Endothelial cell of umbilical vein (primary cell): ENCODE measurements at regions of chr4 and their contacts with region 1.

Region 1: DNA sequence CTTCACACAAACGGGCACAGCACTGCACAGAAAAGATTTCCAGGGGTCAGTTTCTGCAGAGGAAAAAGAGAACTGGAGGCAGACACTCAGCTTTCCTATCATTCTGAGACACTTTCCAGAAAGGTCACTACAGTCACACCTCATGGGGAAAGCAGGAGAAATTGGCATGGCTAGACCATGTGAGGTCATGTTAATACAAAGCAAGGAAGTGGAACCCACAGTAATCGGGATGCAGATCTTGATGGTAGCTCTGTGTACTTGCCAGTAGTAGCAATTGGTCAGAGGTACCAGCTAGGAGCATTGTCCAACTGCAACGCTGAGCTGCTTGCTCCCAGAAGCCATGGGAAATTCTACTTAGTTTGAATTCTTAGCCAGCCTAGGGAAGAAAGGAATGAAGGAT is 255.3 kb upstream of the PCDH10 start:
- DNase-seq: peak; percentile 93
- H3K4me3 ChIP-seq: no peak overlapping the region
- H3K27ac ChIP-seq: no peak overlapping the region
- H3K4me1 ChIP-seq: no peaks in the 10 kb centered on the region
- H3K27me3 ChIP-seq: no peaks in the 10 kb centered on the region
- CTCF ChIP-seq: no peak
- POLR2A ChIP-seq: no peak

Region 2: GRCh38 chr4:132992686-132993085 is 98.9 kb after region 1 on chr4:
- CTCF ChIA-PET with region 1: no interaction called
- POLR2A ChIA-PET with region 1: interaction called, 3 read pairs
- dilution Hi-C with region 1: no loop called
- intact Hi-C with region 1: loop called (anchors 2 kb)
- DNase-seq: peak; percentile 95
- H3K4me3 ChIP-seq: peak overlapping the region in 1 of 3 experiments; percentile 36
- H3K27ac ChIP-seq: peak overlapping the region; percentile 98
- H3K4me1 ChIP-seq: peaks cover 38% of the 10 kb centered on the region
- H3K27me3 ChIP-seq: no peaks in the 10 kb centered on the region
- CTCF ChIP-seq: no peak
- POLR2A ChIP-seq: no peak